Activated B cell treated with CpG ODN at 0.5 μM for 24 hours (primary cell): ENCODE measurements at regions of chr15 and their contacts with region 1.

Region 1: DNA sequence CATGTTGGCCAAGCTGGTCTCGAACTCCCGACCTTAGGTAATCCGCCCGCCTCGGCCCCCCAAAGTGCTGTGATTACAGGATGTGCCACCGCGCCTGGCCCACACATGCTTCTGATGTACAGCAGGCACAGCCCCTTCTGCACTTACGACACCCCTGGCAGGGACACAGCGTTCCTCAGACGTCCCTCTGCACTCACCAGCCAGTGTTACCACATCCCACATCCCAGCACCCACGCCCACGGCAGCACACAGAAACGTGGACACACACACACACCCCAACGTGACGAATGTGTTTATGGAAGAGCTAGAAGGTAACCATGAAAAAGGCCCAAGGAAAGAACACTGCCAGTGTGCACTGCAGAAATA is 576 bp upstream of the RPAP1 start:
- DNase-seq: no peak
- ATAC-seq: no peak
- H3K4me3 Mint-ChIP-seq: peak overlapping the region; percentile 97
- H3K27ac Mint-ChIP-seq: peak overlapping the region; percentile 44
- H3K4me1 Mint-ChIP-seq: peaks cover 16% of the 10 kb centered on the region
- H3K27me3 Mint-ChIP-seq: no peaks in the 10 kb centered on the region
- CTCF ChIP-seq: no peak

Region 2: GRCh38 chr15:41401904-41402267 is 142.7 kb before region 1 on chr15:
- CTCF ChIA-PET with region 1: no interaction called
- POLR2A ChIA-PET with region 1: interaction called, 8 read pairs
- intact Hi-C with region 1: loop called (anchors 5 kb)
- DNase-seq: no peak
- ATAC-seq: no peak
- H3K4me3 Mint-ChIP-seq: peak overlapping the region; percentile 93
- H3K27ac Mint-ChIP-seq: peak overlapping the region; percentile 94
- H3K4me1 Mint-ChIP-seq: peaks cover 16% of the 10 kb centered on the region
- H3K27me3 Mint-ChIP-seq: no peaks in the 10 kb centered on the region
- CTCF ChIP-seq: no peak

Region 3: GRCh38 chr15:41493205-41493901 is 51.3 kb before region 1 on chr15 and contains the start of gene ITPKA:
- CTCF ChIA-PET with region 1: no interaction called
- POLR2A ChIA-PET with region 1: interaction called, 6 read pairs
- intact Hi-C with region 1: loop called (anchors 5 kb)
- DNase-seq: peak; percentile 83
- ATAC-seq: peak; percentile 89
- H3K4me3 Mint-ChIP-seq: peak within 1 kb of the TSS; percentile 77
- H3K27ac Mint-ChIP-seq: no peak within 1 kb of the TSS
- H3K4me1 Mint-ChIP-seq: peaks cover 11% of the 10 kb centered on the region
- H3K27me3 Mint-ChIP-seq: peaks cover 31% of the 10 kb centered on the region
- CTCF ChIP-seq: no peak
- total RNA-seq, gene ITPKA: 0.18 TPM in 1 of 2 replicates, not detected in the other

Region 4: GRCh38 chr15:41530363-41530956 is 14.2 kb before region 1 on chr15:
- CTCF ChIA-PET with region 1: interaction called, 3 read pairs
- POLR2A ChIA-PET with region 1: interaction called, 10 read pairs
- intact Hi-C with region 1: no loop called
- DNase-seq: no peak
- ATAC-seq: no peak
- H3K4me3 Mint-ChIP-seq: peak overlapping the region; percentile 42
- H3K27ac Mint-ChIP-seq: peak overlapping the region; percentile 72
- H3K4me1 Mint-ChIP-seq: peaks cover 25% of the 10 kb centered on the region
- H3K27me3 Mint-ChIP-seq: no peaks in the 10 kb centered on the region
- CTCF ChIP-seq: no peak

Region 5: GRCh38 chr15:41557673-41558399 is 13.2 kb after region 1 on chr15:
- CTCF ChIA-PET with region 1: no interaction called
- POLR2A ChIA-PET with region 1: interaction called, 10 read pairs
- intact Hi-C with region 1: loop called (anchors 1 kb)
- DNase-seq: peak; percentile 39
- ATAC-seq: peak; percentile 73
- H3K4me3 Mint-ChIP-seq: peak overlapping the region; percentile 90
- H3K27ac Mint-ChIP-seq: peak overlapping the region; percentile 59
- H3K4me1 Mint-ChIP-seq: peaks cover 26% of the 10 kb centered on the region
- H3K27me3 Mint-ChIP-seq: peaks cover 40% of the 10 kb centered on the region
- CTCF ChIP-seq: no peak

Region 6: GRCh38 chr15:41621200-41622193 is 76.9 kb after region 1 on chr15:
- CTCF ChIA-PET with region 1: no interaction called
- POLR2A ChIA-PET with region 1: interaction called, 3 read pairs
- intact Hi-C with region 1: loop called (anchors 1 kb)
- DNase-seq: peak; percentile 68
- ATAC-seq: peak; percentile 89
- H3K4me3 Mint-ChIP-seq: peak overlapping the region; percentile 81
- H3K27ac Mint-ChIP-seq: peak overlapping the region; percentile 66
- H3K4me1 Mint-ChIP-seq: peaks cover 16% of the 10 kb centered on the region
- H3K27me3 Mint-ChIP-seq: no peaks in the 10 kb centered on the region
- CTCF ChIP-seq: no peak

Region 7: DNA sequence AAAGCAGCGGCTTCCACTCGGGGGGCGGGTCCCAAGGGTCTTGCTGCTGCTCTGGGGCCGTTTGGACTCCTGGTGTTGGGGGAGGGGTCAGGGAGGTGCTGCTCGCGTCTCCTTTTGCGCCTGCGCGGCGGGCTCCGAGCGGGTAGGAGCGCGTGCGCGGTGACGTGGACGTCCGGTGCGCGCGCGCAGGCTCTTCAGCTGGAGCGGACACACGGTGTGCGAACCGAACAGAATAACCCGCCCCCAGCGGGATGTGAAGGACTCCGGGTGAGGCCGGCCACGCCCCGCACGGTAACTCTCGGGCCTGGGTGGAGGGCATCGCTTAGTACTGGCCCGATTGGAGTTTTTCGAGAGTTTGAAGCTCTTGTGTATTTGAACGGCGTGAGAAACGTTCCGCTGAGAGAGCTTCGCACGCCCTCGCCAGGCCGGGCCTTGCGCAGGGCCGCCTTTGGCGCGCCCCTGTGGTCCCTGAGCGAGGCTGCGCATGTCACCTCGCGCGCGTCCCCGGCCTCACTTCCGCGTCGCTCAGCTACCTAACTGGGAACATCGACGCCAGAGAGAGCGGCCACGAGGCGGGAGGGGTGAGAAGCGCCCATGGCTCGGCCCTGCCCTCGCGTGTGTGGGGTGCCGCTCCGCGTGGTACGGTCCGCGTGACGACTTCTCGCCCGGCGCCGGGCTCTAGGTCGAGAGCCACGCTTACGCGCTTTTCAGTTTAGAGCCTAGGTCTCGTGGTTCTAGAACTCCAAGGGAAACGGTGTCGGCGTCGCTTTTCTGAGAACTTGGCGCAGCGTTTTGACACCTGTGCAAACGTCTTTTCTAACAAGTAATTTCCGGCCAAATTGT is 115.8 kb after region 1 on chr15 and contains the start of gene MGA:
- CTCF ChIA-PET with region 1: no interaction called
- POLR2A ChIA-PET with region 1: no interaction called
- intact Hi-C with region 1: loop called (anchors 1 kb)
- DNase-seq: peak; percentile 92
- ATAC-seq: peak; percentile 84
- H3K4me3 Mint-ChIP-seq: peak within 1 kb of the TSS; percentile 91
- H3K27ac Mint-ChIP-seq: peak within 1 kb of the TSS; percentile 91
- H3K4me1 Mint-ChIP-seq: peaks cover 51% of the 10 kb centered on the region
- H3K27me3 Mint-ChIP-seq: peaks cover 2% of the 10 kb centered on the region
- CTCF ChIP-seq: no peak
- total RNA-seq, gene MGA: 49.9 and 58.3 TPM in 2 replicates